ENCODE measurements at regions of chr3 and their contacts with region 1.

Region 1: GRCh38 chr3:124688581-124689454 is 41.4 kb upstream of the UMPS start:
- DNase-seq: peak; percentile 68 to 83
- ATAC-seq: peak; percentile 64 to 85 (median 82)
- H3K4me3 ChIP-seq: no peak overlapping the region
- H3K27ac ChIP-seq: no peak overlapping the region
- H3K4me1 ChIP-seq: peaks cover 2 to 34% (median 12%) of the 10 kb centered on the region in 9 donors
- H3K27me3 ChIP-seq: no peaks in the 10 kb centered on the region
- CTCF ChIP-seq: peak; percentile 79 to 95 (median 88)

Region 2: DNA sequence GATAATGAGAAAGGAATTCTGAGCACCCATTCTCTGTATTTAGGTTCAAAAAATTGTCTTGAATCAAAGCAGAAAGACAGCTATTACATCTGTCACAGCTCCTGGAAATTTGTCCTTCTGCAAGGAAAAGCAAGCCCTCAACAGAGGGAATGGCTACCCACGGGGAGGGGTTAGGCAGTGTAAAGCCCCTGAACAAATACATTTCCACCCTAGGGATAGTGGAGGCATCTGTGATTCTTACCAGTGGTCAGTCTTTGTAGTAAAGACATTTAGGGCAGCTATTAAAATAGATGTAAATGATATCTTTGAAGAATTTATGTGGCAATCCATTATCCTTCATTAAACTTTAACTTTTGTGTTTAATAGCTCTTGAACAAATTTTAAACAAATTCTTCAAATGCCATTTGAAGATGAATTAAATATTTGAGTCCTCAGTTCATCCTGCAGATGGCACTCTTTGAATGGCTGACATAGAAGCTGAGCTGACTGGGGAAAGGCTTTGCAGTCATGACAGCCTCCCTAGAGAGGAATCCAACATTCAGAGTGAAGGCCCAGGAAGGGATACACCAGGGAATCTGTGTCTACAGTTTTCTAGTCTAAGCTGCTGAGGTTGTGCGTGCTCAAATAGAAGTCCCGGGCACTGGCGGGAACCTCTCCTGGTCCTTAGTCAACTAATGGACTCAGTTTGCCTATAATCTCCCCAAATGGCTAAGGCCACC is 337.2 kb before region 1 on chr3:
- intact Hi-C with region 1: loop called in 1 of 10 experiments (anchors 10 kb)
- DNase-seq: peak in 1 of 2 donors; percentile 52
- ATAC-seq: peak in 7 of 8 donors; percentile 63 to 88 (median 80)
- H3K4me3 ChIP-seq: no peak overlapping the region
- H3K27ac ChIP-seq: no peak overlapping the region
- H3K4me1 ChIP-seq: no peaks in the 10 kb centered on the region
- H3K27me3 ChIP-seq: no peaks in the 10 kb centered on the region
- CTCF ChIP-seq: peak; percentile 39 to 74 (median 60)

Region 3: GRCh38 chr3:124567179-124567578 is 121.6 kb before region 1 on chr3:
- intact Hi-C with region 1: loop called (anchors 1 to 5 kb)
- DNase-seq: no peak
- ATAC-seq: no peak
- H3K4me3 ChIP-seq: no peak overlapping the region
- H3K27ac ChIP-seq: no peak overlapping the region
- H3K4me1 ChIP-seq: peaks cover 0 to 35% (median 7%) of the 10 kb centered on the region in 9 donors
- H3K27me3 ChIP-seq: no peaks in the 10 kb centered on the region
- CTCF ChIP-seq: no peak

Region 4: GRCh38 chr3:124620600-124621063 is 68.2 kb before region 1 on chr3:
- intact Hi-C with region 1: loop called in 1 of 10 experiments (anchors 10 kb)
- DNase-seq: peak in 1 of 2 donors; percentile 40
- ATAC-seq: peak; percentile 40 to 90 (median 72)
- H3K4me3 ChIP-seq: peak overlapping the region in 1 of 10 donors; percentile 1
- H3K27ac ChIP-seq: peak overlapping the region in 9 of 10 donors; percentile 50 to 82 (median 69)
- H3K4me1 ChIP-seq: peaks cover 0 to 45% (median 28%) of the 10 kb centered on the region in 9 donors
- H3K27me3 ChIP-seq: no peaks in the 10 kb centered on the region
- CTCF ChIP-seq: peak in 4 of 9 donors; percentile 23 to 43 (median 32)

Region 5: DNA sequence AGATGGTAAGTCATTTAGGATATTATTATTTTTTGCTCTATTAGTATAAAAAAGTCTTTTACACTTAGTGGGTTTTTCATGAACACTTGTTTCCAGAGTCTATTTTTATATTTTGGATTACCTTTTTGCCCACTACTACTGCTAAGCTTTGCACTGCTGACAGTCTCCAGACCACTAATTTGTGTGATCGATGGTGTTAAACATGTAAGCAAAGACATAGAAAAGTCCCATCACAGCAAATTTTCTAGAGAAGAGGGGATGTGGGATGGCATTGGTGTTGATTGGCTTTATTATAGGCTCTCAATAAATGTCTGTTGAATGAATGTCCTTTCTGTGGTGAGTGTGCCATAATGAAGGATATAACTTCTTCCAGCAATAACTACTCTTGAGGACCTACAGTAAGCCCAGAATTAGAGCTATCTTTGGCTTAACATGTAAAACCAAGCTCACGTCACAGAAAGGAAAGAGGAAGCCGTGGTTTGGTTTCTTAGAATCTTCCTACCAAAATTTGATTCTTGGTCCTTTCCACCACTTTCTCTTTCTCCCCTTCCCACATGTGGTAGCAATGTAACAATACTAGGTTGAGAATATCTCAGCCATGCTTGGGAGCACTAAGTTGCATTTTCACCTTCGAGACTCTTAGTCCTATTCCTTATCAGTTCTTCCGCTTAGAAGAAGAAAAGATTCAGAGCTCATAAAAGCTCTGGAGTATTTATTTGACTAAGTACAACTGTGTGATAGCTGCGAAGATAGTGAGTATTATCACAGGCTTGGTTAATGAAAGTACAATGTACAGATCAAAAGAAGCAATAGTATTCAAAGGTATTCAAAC is 49.2 kb before region 1 on chr3:
- intact Hi-C with region 1: no loop called
- DNase-seq: no peak
- ATAC-seq: no peak
- H3K4me3 ChIP-seq: no peak overlapping the region
- H3K27ac ChIP-seq: no peak overlapping the region
- H3K4me1 ChIP-seq: peaks cover 0 to 18% (median 0%) of the 10 kb centered on the region in 9 donors
- H3K27me3 ChIP-seq: no peaks in the 10 kb centered on the region
- CTCF ChIP-seq: no peak